ENCODE measurements at regions of chr2 and their contacts with region 1.

Region 1: DNA sequence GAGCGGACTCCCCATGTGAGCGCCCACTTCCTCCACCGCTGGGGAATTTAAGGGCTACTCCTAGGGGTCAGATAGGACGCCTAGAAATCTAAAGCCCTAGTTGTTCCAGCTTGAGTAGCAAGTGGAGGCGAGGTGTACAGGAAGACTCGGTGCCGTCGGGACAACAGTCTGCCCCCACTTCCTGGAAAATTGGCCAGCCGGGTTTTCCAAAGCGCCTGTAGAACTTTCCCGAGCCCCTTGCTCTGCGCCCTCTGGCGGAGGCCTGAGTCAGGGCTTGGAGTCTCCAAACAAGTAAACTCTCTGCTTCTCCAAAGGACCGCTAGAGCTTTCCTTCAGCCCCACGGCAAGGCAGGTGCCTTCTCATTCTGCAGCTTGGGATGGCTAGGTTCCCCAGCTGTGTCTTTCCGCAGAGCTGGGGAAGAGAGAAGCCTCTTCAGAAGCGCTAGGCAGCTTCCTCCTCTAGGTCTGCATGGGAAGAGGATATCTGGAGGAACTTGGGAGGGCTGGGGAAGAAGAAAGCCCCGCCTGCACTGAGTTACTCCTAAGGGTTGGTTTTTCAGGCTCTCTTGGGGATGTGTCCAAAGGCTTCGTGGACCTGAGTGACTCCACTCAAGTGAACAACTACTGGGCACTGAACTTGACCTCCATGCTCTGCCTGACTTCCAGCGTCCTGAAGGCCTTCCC is 688 bp downstream of the SPR start:
- DNase-seq: peak; percentile 86
- H3K4me3 ChIP-seq: peak overlapping the region; percentile 70 to 95
- H3K27ac ChIP-seq: peak overlapping the region; percentile 71 to 74
- H3K4me1 ChIP-seq: peaks cover 6 to 12% of the 10 kb centered on the region in 2 experiments; a peak in 2 of 4 replicates
- H3K27me3 ChIP-seq: no peaks in the 10 kb centered on the region
- CTCF ChIP-seq: peak; percentile 92
- EP300 ChIP-seq: peak in 1 of 2 experiments; percentile 31; a peak in 1 of 4 replicates
- RAD21 ChIP-seq: peak; percentile 47; the same call in 1 of the 2 replicates

Region 2: GRCh38 chr2:72862239-72862988 is 25.5 kb before region 1 on chr2:
- CTCF ChIA-PET with region 1: interaction called, 37 read pairs
- POLR2A ChIA-PET with region 1: no interaction called
- DNase-seq: peak; percentile 91
- H3K4me3 ChIP-seq: peak overlapping the region; percentile 31 to 37
- H3K27ac ChIP-seq: no peak overlapping the region
- H3K4me1 ChIP-seq: peaks cover 0 to 9% of the 10 kb centered on the region in 2 experiments; a peak in 1 of 4 replicates
- H3K27me3 ChIP-seq: peaks cover 5% of the 10 kb centered on the region; the same call in 1 of the 2 replicates
- CTCF ChIP-seq: peak; percentile 95
- EP300 ChIP-seq: no peak
- RAD21 ChIP-seq: peak; percentile 75

Region 3: GRCh38 chr2:72915907-72916742 is 28.2 kb after region 1 on chr2:
- CTCF ChIA-PET with region 1: interaction called, 35 read pairs
- POLR2A ChIA-PET with region 1: no interaction called
- DNase-seq: peak; percentile 79
- H3K4me3 ChIP-seq: no peak overlapping the region
- H3K27ac ChIP-seq: no peak overlapping the region
- H3K4me1 ChIP-seq: peaks cover 7 to 13% of the 10 kb centered on the region in 2 experiments; a peak in 2 of 4 replicates
- H3K27me3 ChIP-seq: peaks cover 88% of the 10 kb centered on the region
- CTCF ChIP-seq: no peak
- EP300 ChIP-seq: no peak
- RAD21 ChIP-seq: no peak

Region 4: GRCh38 chr2:72940786-72941185 is 52.9 kb after region 1 on chr2:
- CTCF ChIA-PET with region 1: interaction called, 36 read pairs
- POLR2A ChIA-PET with region 1: no interaction called
- DNase-seq: no peak
- H3K4me3 ChIP-seq: no peak overlapping the region
- H3K27ac ChIP-seq: no peak overlapping the region
- H3K4me1 ChIP-seq: peaks cover 0 to 11% of the 10 kb centered on the region in 2 experiments; a peak in 1 of 4 replicates
- H3K27me3 ChIP-seq: no peaks in the 10 kb centered on the region
- CTCF ChIP-seq: no peak
- EP300 ChIP-seq: no peak
- RAD21 ChIP-seq: no peak

Region 5: GRCh38 chr2:72973566-72974435 is 85.9 kb after region 1 on chr2:
- CTCF ChIA-PET with region 1: interaction called, 115 read pairs
- POLR2A ChIA-PET with region 1: no interaction called
- DNase-seq: peak; percentile 86
- H3K4me3 ChIP-seq: peak overlapping the region in 1 of 2 experiments; percentile 5; a peak in 1 of 4 replicates
- H3K27ac ChIP-seq: no peak overlapping the region
- H3K4me1 ChIP-seq: peaks cover 0 to 15% of the 10 kb centered on the region in 2 experiments; a peak in 1 of 4 replicates
- H3K27me3 ChIP-seq: no peaks in the 10 kb centered on the region
- CTCF ChIP-seq: peak; percentile 82
- EP300 ChIP-seq: no peak
- RAD21 ChIP-seq: peak; percentile 69

Region 6: DNA sequence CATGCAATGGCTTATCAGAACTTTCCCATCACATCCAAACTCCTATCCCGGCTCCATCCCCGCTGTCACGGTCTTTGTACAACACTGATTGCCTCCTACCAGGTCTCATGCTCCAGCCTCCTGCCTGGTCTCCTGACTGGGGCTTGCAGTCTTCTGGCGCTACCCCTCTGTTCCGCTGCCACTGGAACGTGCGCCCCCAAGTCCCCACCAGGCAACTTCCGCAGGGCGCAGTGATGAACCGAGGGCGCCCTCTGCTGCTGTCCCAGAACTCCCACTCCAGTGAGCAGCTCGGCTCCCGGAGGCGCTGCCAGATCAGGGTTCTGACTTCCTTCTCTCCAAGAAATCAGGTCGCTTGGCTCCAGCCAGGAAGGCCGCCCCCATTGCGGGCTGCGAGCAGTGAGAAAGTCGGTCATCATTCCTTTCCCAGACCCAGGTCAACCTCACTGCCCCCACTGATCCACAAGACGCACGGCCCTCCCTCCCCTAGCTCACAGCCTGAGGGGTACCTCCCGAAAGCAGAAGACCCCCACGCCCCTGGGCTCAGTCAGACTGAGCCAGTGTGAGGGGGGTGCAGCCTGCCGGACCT is 268.7 kb after region 1 on chr2:
- CTCF ChIA-PET with region 1: interaction called, 66 read pairs
- POLR2A ChIA-PET with region 1: no interaction called
- DNase-seq: peak; percentile 83
- H3K4me3 ChIP-seq: peak overlapping the region; percentile 6 to 49; a peak in 1 of 4 replicates
- H3K27ac ChIP-seq: no peak overlapping the region
- H3K4me1 ChIP-seq: peaks cover 0 to 5% of the 10 kb centered on the region in 2 experiments; a peak in 1 of 4 replicates
- H3K27me3 ChIP-seq: no peaks in the 10 kb centered on the region
- CTCF ChIP-seq: peak; percentile 87
- EP300 ChIP-seq: no peak
- RAD21 ChIP-seq: peak; percentile 92